Dendritic cell treated with granulocyte-macrophage colony-stimulating factor and Interleukin-4, amounts not matched to agents 40 ng/mL and 50 ng/mL, for 4 days (primary cell): ENCODE measurements at regions of chr12 and their contacts with region 1.

Region 1: GRCh38 chr12:104108755-104109445 is 29.1 kb downstream of the NFYB start:
- H3K4me3 Mint-ChIP-seq: no peak overlapping the region
- H3K27ac Mint-ChIP-seq: no peak overlapping the region
- H3K4me1 Mint-ChIP-seq: peaks cover 14% of the 10 kb centered on the region
- H3K27me3 Mint-ChIP-seq: no peaks in the 10 kb centered on the region

Region 2: GRCh38 chr12:103771466-103771865 is 337.4 kb before region 1 on chr12:
- intact Hi-C with region 1: loop called (anchors 5 kb)
- H3K4me3 Mint-ChIP-seq: no peak overlapping the region
- H3K27ac Mint-ChIP-seq: no peak overlapping the region
- H3K4me1 Mint-ChIP-seq: peaks cover 10% of the 10 kb centered on the region
- H3K27me3 Mint-ChIP-seq: no peaks in the 10 kb centered on the region

Region 3: DNA sequence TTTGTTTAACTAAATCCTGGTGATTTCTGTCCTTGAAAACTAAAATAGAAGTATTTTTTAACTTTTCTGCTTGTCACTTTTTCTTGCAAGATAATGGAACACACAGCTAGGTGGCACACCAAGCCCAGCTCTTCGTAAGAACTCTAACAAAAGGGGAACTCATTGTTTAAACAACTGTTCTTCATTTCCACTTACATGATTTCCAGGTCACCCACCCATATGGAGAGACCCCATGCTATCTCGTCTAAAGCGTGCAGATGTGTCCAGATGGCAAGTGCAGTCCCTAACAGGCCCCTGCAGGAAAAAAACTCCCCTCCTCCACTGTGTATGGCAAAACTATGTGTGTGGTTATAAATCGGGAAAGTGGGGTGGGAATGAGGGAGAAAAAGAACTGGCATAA is 224.6 kb before region 1 on chr12:
- intact Hi-C with region 1: loop called (anchors 1 kb)
- H3K4me3 Mint-ChIP-seq: no peak overlapping the region
- H3K27ac Mint-ChIP-seq: no peak overlapping the region
- H3K4me1 Mint-ChIP-seq: peaks cover 5% of the 10 kb centered on the region
- H3K27me3 Mint-ChIP-seq: no peaks in the 10 kb centered on the region

Region 4: DNA sequence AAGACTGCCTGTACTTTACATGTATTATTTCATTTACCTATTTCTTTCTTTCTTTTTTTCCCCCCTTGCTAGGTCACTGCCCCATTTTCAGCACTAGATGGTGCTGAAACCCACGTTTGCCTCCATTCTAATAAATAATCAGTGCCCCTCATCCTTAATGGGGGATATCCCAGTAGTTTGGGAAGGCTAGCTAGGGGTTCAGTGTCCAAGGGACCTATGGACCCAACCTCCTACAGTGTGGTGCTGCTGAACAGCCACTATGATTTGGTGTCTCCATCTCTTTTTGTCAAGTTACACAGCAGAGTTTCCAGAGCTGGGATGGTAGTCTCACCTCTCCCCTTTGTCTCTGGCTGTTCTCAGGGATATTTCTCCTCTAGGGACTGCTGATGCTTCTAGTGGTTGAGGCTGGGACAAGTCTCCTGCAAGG is 51.1 kb before region 1 on chr12:
- intact Hi-C with region 1: loop called (anchors 1 kb)
- H3K4me3 Mint-ChIP-seq: no peak overlapping the region
- H3K27ac Mint-ChIP-seq: no peak overlapping the region
- H3K4me1 Mint-ChIP-seq: peaks cover 8% of the 10 kb centered on the region
- H3K27me3 Mint-ChIP-seq: peaks cover 21% of the 10 kb centered on the region

Region 5: GRCh38 chr12:104064031-104064822 is 44.7 kb before region 1 on chr12 and contains the start of gene HCFC2:
- intact Hi-C with region 1: loop called (anchors 2 kb)
- H3K4me3 Mint-ChIP-seq: peak within 1 kb of the TSS; percentile 90
- H3K27ac Mint-ChIP-seq: peak within 1 kb of the TSS; percentile 89
- H3K4me1 Mint-ChIP-seq: peaks cover 14% of the 10 kb centered on the region
- H3K27me3 Mint-ChIP-seq: peaks cover 8% of the 10 kb centered on the region

Region 6: DNA sequence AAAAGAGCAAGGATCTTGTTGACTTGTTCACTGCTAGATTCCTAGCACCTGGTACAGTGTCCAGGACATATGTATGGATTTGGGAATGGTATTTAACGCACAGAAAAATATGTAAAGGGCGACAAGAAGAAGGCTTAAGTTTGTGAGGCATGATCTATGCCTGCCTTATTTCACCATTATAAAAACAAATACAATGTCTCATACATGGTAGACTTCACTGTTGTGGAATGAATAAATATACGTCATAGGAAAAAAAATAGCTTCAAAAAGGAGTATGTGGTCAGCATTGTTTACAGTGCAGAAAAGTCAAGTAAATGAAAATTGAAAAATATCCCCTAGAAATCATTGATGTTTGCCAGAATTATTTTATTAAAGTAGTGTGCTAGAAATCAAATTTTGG is 14.6 kb before region 1 on chr12:
- intact Hi-C with region 1: no loop called
- H3K4me3 Mint-ChIP-seq: no peak overlapping the region
- H3K27ac Mint-ChIP-seq: no peak overlapping the region
- H3K4me1 Mint-ChIP-seq: no peaks in the 10 kb centered on the region
- H3K27me3 Mint-ChIP-seq: no peaks in the 10 kb centered on the region